CD4-positive, alpha-beta memory T cell (primary cell): ENCODE measurements at regions of chr19 and their contacts with region 1.

Region 1: GRCh38 chr19:14405758-14406644 is 13.1 kb downstream of the DDX39A start:
- DNase-seq: peak; percentile 87 to 93 (median 89)
- H3K4me3 ChIP-seq: no peak overlapping the region
- H3K4me3 Mint-ChIP-seq: peak overlapping the region in 2 of 8 donors; percentile 31 to 46
- H3K27ac ChIP-seq: peak overlapping the region; percentile 20
- H3K27ac Mint-ChIP-seq: peak overlapping the region; percentile 72 to 94 (median 81)
- H3K4me1 ChIP-seq: peaks cover 37% of the 10 kb centered on the region
- H3K4me1 Mint-ChIP-seq: peaks cover 14 to 71% (median 25%) of the 10 kb centered on the region in 4 donors
- H3K27me3 ChIP-seq: no peaks in the 10 kb centered on the region
- H3K27me3 Mint-ChIP-seq: no peaks in the 10 kb centered on the region

Region 2: DNA sequence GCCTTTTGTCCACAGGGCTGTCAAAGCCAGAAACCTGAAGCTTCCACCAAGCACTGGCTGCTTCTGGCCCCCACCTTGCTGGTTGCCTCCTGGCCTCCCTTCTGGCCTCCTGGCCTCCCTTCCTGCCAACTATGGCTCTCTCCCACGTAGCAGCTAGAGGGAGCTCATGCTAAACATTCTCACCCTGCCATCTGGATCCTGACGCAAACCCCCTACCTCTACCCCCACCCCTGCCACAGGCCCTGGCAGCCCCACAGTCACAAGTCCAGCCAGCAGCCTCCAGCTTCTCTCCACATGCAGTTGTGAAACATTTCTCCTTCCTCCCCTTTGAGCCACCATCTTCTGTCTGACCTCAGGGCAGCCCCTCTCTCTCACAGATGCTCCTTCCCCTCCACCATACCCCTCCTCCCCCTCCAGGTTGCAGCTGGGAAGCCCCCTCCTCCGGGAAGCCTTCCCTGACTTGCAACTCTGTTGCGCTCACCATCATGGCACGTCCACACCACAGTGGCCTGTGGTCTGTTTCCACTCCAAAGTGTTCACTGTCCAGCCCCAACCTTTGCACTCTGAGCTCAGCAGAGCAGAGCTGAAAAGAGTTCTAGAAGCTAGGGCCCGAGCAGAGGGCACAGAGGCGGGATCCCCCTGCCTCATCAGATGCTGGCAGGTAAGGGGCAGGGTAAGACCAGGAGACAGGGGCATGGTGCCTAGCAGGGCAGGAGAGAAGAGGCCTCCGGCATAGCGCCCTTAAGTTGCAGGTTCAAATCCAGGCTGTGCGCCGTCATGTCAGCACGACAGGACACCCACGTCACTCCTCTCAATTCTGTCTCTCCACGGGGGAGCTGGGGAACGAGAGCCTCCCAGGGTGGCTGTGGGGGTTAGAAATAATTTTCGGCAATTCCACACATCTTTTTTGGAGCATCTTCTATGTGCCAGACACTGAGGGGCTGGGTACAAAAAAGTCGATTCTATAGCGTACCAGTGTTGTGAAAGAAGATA is 207.3 kb before region 1 on chr19:
- CTCF ChIA-PET with region 1: interaction called, 12 read pairs
- POLR2A ChIA-PET with region 1: no interaction called
- intact Hi-C with region 1: loop called (anchors 1 kb)
- DNase-seq: no peak
- H3K4me3 ChIP-seq: no peak overlapping the region
- H3K4me3 Mint-ChIP-seq: no peak overlapping the region
- H3K27ac ChIP-seq: no peak overlapping the region
- H3K27ac Mint-ChIP-seq: no peak overlapping the region
- H3K4me1 ChIP-seq: peaks cover 3% of the 10 kb centered on the region
- H3K4me1 Mint-ChIP-seq: peaks cover 15 to 47% (median 33%) of the 10 kb centered on the region in 4 donors
- H3K27me3 ChIP-seq: no peaks in the 10 kb centered on the region
- H3K27me3 Mint-ChIP-seq: peaks cover 0 to 1% of the 10 kb centered on the region in 2 donors

Region 3: GRCh38 chr19:14277608-14278007 is 128.4 kb before region 1 on chr19:
- CTCF ChIA-PET with region 1: no interaction called
- POLR2A ChIA-PET with region 1: no interaction called
- intact Hi-C with region 1: no loop called
- DNase-seq: no peak
- H3K4me3 ChIP-seq: no peak overlapping the region
- H3K4me3 Mint-ChIP-seq: no peak overlapping the region
- H3K27ac ChIP-seq: no peak overlapping the region
- H3K27ac Mint-ChIP-seq: no peak overlapping the region
- H3K4me1 ChIP-seq: peaks cover 11% of the 10 kb centered on the region
- H3K4me1 Mint-ChIP-seq: peaks cover 8 to 18% (median 10%) of the 10 kb centered on the region in 4 donors
- H3K27me3 ChIP-seq: no peaks in the 10 kb centered on the region
- H3K27me3 Mint-ChIP-seq: peaks cover 2 to 5% of the 10 kb centered on the region in 2 donors

Region 4: DNA sequence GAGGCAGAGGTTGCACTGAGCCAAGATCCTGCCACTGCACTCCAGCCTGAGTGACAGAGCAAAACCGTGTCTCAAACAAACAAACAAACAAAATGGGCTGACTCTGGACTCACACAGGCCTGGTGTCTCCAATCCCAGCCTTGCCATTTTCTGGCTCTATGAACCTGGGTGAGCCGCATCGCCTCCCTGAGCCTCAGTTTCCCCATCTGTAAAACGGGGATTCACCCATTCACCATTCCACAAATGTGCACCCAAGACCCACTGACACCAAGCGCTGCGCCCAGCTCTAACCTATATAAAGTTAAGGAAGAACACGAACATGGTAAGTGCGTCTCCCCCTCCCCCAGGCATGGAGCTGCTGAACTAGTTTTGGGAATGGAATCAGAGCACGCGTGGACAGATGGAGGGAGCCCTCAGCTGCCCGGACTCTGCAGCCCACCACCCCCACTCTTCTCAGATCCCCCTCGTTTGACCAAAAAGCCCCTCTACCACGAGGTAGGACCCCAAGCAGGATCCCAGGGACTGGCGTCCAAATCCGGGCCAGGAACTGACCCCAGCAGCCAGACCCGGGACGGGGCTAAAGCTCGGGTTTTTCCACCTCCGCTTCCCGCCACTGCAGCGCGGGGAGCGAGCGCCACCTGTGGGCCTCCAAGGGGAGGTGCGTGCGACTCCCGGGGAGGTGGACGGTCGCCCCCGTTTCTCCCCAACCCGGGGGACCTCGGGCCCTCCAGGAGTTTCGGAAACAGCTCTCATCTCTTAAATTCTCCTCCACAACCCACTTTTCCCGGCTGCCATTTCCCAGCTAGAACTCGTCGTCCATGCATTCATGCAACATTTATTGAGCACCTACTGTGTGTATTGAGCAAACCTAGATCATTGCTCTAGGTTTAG is 57.8 kb before region 1 on chr19:
- CTCF ChIA-PET with region 1: interaction called, 42 read pairs
- POLR2A ChIA-PET with region 1: interaction called, 206 read pairs
- intact Hi-C with region 1: no loop called
- DNase-seq: peak; percentile 49 to 66 (median 59)
- H3K4me3 ChIP-seq: no peak overlapping the region
- H3K4me3 Mint-ChIP-seq: peak overlapping the region; percentile 48 to 72 (median 68)
- H3K27ac ChIP-seq: no peak overlapping the region
- H3K27ac Mint-ChIP-seq: peak overlapping the region in 3 of 7 donors; percentile 19 to 62 (median 22)
- H3K4me1 ChIP-seq: peaks cover 27% of the 10 kb centered on the region
- H3K4me1 Mint-ChIP-seq: peaks cover 9 to 28% (median 17%) of the 10 kb centered on the region in 4 donors
- H3K27me3 ChIP-seq: no peaks in the 10 kb centered on the region
- H3K27me3 Mint-ChIP-seq: no peaks in the 10 kb centered on the region

Region 5: GRCh38 chr19:14366498-14366915 is 39.5 kb before region 1 on chr19:
- CTCF ChIA-PET with region 1: interaction called, 121 read pairs
- POLR2A ChIA-PET with region 1: interaction called, 206 read pairs
- intact Hi-C with region 1: loop called (anchors 1 kb)
- DNase-seq: peak; percentile 92 to 96 (median 94)
- H3K4me3 ChIP-seq: peak overlapping the region in 1 of 2 donors; percentile 54
- H3K4me3 Mint-ChIP-seq: peak overlapping the region; percentile 55 to 92 (median 80)
- H3K27ac ChIP-seq: peak overlapping the region; percentile 100
- H3K27ac Mint-ChIP-seq: peak overlapping the region; percentile 89 to 100 (median 97)
- H3K4me1 ChIP-seq: peaks cover 92% of the 10 kb centered on the region
- H3K4me1 Mint-ChIP-seq: peaks cover 42 to 76% (median 58%) of the 10 kb centered on the region in 4 donors
- H3K27me3 ChIP-seq: no peaks in the 10 kb centered on the region
- H3K27me3 Mint-ChIP-seq: no peaks in the 10 kb centered on the region

Region 6: GRCh38 chr19:14393329-14393728 is 12.7 kb before region 1 on chr19:
- CTCF ChIA-PET with region 1: interaction called, 5 read pairs
- POLR2A ChIA-PET with region 1: interaction called, 18 read pairs
- intact Hi-C with region 1: no loop called
- DNase-seq: no peak
- H3K4me3 ChIP-seq: no peak overlapping the region
- H3K4me3 Mint-ChIP-seq: peak overlapping the region in 1 of 8 donors; percentile 35
- H3K27ac ChIP-seq: no peak overlapping the region
- H3K27ac Mint-ChIP-seq: peak overlapping the region in 6 of 7 donors; percentile 52 to 92 (median 72)
- H3K4me1 ChIP-seq: no peaks in the 10 kb centered on the region
- H3K4me1 Mint-ChIP-seq: peaks cover 0 to 14% (median 9%) of the 10 kb centered on the region in 4 donors
- H3K27me3 ChIP-seq: no peaks in the 10 kb centered on the region
- H3K27me3 Mint-ChIP-seq: no peaks in the 10 kb centered on the region

Region 7: DNA sequence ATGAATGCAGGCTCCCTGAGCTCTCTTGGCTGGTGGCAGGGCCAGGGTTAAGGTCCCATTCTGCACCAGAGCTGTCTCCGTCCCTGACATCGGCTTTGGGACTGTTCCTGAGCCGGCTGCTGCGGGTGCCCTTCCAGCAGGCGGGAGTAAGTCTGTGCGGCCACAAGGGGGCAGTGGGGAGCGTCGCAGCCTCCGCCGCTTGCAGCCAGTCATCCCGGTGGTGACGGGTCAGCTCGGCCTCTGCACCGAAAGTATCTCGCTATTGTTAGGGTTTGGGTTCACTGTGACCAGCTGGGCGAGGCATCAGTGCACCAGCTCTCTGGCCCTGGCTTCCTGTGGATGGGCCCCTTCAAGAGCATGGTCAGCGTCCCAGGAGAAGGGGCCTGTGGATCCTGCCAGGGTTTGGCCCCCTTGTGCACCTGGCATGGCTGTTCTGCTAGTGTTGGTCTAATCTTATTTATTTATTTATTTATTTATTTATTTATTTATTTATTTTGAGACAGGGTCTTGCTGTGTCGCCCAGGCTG is 150.7 kb after region 1 on chr19:
- CTCF ChIA-PET with region 1: no interaction called
- POLR2A ChIA-PET with region 1: no interaction called
- intact Hi-C with region 1: no loop called
- DNase-seq: peak; percentile 58 to 65 (median 62)
- H3K4me3 ChIP-seq: peak overlapping the region in 1 of 2 donors; percentile 18
- H3K4me3 Mint-ChIP-seq: peak overlapping the region; percentile 36 to 79 (median 60)
- H3K27ac ChIP-seq: no peak overlapping the region
- H3K27ac Mint-ChIP-seq: peak overlapping the region in 6 of 7 donors; percentile 52 to 95 (median 74)
- H3K4me1 ChIP-seq: peaks cover 45% of the 10 kb centered on the region
- H3K4me1 Mint-ChIP-seq: peaks cover 24 to 65% (median 30%) of the 10 kb centered on the region in 4 donors
- H3K27me3 ChIP-seq: no peaks in the 10 kb centered on the region
- H3K27me3 Mint-ChIP-seq: no peaks in the 10 kb centered on the region